PC-3 (cell line): ENCODE measurements at regions of chr11 and their contacts with region 1.

Region 1: DNA sequence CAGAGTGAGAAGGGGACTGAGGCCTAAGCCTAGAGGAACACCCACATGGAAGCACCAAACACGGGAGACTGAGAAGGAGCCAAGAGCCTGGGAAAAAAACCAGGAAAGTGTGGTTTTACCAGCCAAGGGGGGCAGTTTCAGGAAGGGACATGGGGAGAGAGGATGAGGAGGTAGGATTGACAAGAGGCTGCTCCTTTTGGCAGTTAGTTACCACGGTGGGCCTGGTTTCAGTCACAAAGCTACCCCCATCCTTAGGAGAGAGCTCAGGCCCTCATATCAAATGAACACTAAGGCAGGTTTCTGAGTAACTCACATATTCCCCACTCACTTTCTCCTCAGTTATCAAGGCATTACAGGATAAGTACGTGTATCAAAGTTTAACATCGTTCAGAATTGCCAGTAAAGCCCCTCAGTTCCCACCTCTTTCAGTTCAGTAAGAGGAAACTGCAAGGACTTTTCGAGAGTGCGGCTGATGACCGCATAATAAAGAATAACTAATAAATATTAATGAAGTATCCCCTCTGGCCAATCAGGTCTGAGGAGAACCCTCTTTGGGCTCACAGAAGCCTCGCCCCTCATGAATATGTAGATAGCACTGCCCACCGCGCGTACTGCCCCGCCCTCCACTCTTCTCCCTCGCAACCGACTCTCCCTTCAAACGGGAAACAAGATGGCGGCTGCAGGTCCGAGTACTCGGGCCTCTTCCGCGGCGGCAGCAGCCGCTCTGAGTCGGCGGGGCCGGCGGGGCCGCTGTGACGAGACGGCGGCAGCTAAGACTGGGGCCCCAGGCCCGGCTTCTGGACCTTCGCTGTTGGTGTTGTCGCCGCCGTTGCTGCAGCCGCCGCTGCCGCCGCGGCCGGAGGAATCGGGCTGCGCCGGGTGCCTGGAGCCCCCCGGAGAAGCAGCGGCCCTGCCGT is at the start of gene RNF169:
- DNase-seq: peak; percentile 97
- ATAC-seq: peak; percentile 97
- H3K4me3 ChIP-seq: peak within 1 kb of the TSS; percentile 90
- H3K27ac ChIP-seq: peak within 1 kb of the TSS; percentile 55
- H3K4me1 ChIP-seq: peaks cover 24% of the 10 kb centered on the region
- H3K27me3 ChIP-seq: no peaks in the 10 kb centered on the region
- CTCF ChIP-seq: no peak
- total RNA-seq, gene RNF169: 20.4 and 20.8 TPM in 2 replicates

Region 2: GRCh38 chr11:74773481-74773880 is 25.0 kb after region 1 on chr11:
- CTCF ChIA-PET with region 1: interaction called, 10 read pairs
- POLR2A ChIA-PET with region 1: no interaction called
- intact Hi-C with region 1: no loop called
- DNase-seq: no peak
- ATAC-seq: peak; percentile 39; the same call in 1 of the 2 replicates
- H3K4me3 ChIP-seq: no peak overlapping the region
- H3K27ac ChIP-seq: no peak overlapping the region
- H3K4me1 ChIP-seq: no peaks in the 10 kb centered on the region
- H3K27me3 ChIP-seq: no peaks in the 10 kb centered on the region
- CTCF ChIP-seq: no peak

Region 3: DNA sequence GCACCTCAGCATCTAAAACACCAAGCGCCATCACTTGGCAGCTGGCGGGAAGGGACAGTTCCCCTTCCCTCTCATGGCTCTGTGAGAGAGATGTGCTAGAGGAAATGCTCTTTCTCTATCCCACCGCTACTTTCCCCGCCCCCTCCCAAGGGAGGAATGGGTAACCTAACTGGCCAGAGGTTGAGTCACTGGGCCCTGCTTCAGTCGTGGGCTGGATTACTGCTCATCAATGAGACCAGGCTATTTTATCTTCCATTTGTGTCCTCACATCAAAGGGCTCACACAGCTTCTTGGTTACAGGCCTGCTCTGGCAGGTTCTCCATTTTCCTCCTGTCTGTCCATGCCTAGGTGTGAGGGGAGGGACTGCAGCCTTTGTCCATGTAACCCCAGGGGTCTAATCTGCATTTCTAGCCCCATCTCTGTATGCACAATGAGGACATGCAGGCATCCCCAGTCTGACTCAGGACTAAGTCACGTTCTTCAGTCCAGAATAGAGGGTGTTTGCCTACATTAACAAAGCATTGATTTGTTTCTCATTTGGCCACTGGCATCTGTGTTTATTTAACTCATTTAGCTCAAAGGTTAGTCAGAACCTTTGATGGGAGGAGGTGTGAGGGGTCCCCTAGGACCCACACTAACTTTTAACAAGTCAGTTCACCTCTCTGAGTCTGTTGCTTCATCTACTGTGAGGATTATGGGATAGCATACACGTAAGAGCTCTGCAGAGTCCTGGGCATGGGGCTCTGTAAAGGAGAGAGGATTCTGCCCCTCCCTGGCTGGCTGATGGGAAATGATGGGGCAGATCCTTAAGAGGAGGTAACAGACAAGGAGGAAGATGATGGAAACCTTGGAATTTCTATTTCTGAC is 101.3 kb after region 1 on chr11:
- CTCF ChIA-PET with region 1: no interaction called
- POLR2A ChIA-PET with region 1: no interaction called
- intact Hi-C with region 1: loop called (anchors 1 kb)
- DNase-seq: peak; percentile 74
- ATAC-seq: peak; percentile 91
- H3K4me3 ChIP-seq: no peak overlapping the region
- H3K27ac ChIP-seq: peak overlapping the region; percentile 78
- H3K4me1 ChIP-seq: peaks cover 18% of the 10 kb centered on the region
- H3K27me3 ChIP-seq: no peaks in the 10 kb centered on the region
- CTCF ChIP-seq: no peak